ENCODE measurements at regions of chr2 and their contacts with region 1.

Region 1: GRCh38 chr2:231854671-231855070 is 68.4 kb downstream of the COPS7B start:
- DNase-seq: peak; percentile 56
- H3K4me3 ChIP-seq: no peak overlapping the region
- H3K27ac ChIP-seq: no peak overlapping the region
- H3K4me1 ChIP-seq: peaks cover 2% of the 10 kb centered on the region
- H3K27me3 ChIP-seq: no peaks in the 10 kb centered on the region
- CTCF ChIP-seq: no peak

Region 2: DNA sequence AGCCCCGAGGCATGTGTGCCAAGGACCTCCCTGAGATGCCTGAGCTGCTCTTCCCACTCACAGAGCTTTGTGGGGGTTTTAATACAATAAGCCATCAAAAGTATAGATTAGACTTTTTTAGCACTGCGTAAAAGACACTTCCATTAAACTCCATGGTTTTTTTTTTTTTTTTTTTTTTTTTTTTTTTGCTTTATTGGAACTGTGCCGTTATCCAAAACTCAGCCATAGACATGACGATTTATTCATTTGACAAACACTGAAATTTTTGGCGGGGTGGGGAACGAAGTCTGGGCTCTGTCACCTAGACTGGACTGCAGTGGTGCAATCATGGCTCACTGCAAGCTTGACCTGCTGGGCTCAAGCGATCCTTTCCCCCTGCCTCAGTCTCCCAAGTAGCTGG is 53.1 kb after region 1 on chr2:
- CTCF ChIA-PET with region 1: no interaction called
- dilution Hi-C with region 1: no loop called
- in situ Hi-C with region 1: no loop called
- intact Hi-C with region 1: loop called (anchors 2 kb)
- DNase-seq: no peak
- H3K4me3 ChIP-seq: no peak overlapping the region
- H3K27ac ChIP-seq: no peak overlapping the region
- H3K4me1 ChIP-seq: peaks cover 3% of the 10 kb centered on the region
- H3K27me3 ChIP-seq: no peaks in the 10 kb centered on the region
- CTCF ChIP-seq: no peak

Measured in mammary epithelial cell (primary cell).